Right cardiac atrium (tissue), 5 donors: ENCODE measurements at regions of chr1 and their contacts with region 1.

Region 1: GRCh38 chr1:26145041-26145959 is 13.6 kb upstream of the FAM110D start:
- DNase-seq: peak; percentile 78 to 86 (median 82)
- ATAC-seq: peak; percentile 88 to 92
- H3K4me3 ChIP-seq: no peak overlapping the region
- H3K27ac ChIP-seq: no peak overlapping the region
- H3K4me1 ChIP-seq: no peaks in the 10 kb centered on the region
- H3K27me3 ChIP-seq: no peaks in the 10 kb centered on the region

Region 2: DNA sequence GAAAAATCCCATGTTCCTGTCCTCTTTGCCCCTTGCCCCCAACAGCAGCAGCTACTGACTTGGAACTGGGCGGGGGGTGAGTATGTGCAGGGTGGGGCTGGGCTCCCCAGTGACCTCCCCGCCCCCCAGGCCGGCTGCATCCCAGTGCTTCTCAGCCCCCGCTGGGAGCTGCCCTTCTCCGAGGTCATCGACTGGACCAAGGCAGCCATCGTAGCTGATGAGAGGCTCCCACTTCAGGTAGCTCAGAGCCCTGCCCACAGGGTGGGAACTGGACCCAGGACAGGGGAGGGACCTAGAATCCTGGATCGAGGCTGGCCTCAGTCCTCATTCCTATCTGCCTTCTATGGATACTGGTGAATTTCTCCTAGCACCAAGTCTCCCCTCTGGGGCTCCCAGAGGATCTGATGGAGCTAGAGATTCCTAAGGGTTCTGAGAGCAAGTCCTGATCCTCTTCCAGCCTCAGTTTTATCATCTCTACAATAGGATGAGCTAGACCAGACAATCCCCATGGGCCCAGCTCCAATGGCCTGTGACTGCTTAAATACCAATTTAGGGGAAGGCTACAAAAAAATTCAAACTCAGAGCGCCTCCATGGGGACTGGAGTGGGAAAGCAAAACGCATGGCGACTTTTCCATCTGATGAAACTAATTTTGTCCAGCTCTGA is 115.7 kb before region 1 on chr1:
- intact Hi-C with region 1: loop called in 2 of 4 experiments (anchors 5 to 10 kb)
- DNase-seq: no peak
- ATAC-seq: no peak
- H3K4me3 ChIP-seq: no peak overlapping the region
- H3K27ac ChIP-seq: no peak overlapping the region
- H3K4me1 ChIP-seq: no peaks in the 10 kb centered on the region
- H3K27me3 ChIP-seq: no peaks in the 10 kb centered on the region

Region 3: DNA sequence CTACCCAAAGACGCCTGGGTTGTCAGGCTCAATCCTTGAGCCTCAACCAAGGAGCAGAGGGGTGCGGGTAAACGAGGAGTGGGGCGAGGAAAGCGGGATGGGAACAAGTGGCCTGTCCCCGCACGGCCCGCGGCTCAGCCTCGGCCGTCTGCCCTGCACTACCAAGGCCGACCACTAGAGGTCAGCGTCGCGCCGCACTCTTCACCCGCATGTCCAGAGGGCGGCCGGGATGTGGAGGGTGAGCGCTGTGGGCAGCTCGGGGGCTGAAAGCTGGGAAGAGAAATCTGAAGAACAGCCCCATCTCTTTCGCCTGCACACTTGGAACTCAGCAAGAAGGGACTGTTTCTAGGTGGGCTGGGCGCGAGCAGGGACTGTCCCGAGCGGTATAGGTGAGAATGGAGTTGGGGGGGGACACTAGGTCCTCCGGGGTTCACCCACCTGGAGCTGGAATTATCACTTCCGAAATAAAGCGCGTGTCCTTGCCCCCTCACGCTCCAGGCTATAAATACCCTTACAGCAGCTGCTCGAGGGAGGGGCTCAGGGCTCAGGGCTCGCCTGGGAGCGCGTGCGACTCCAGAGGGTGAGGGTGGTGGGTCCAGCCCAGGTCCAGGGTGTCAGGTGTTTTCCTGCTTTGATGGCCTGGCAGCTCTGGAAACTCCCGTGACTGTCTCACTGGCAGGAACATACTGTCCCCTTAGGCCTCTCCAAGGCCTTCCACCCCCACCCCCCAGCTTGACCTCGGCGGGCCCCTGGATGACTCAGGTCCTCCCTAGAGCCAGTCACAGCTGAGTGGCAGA is 109.1 kb before region 1 on chr1:
- intact Hi-C with region 1: loop called in 3 of 4 experiments (anchors 5 to 10 kb)
- DNase-seq: peak; percentile 83 to 92 (median 91)
- ATAC-seq: peak; percentile 91
- H3K4me3 ChIP-seq: peak overlapping the region; percentile 61
- H3K27ac ChIP-seq: peak overlapping the region; percentile 81
- H3K4me1 ChIP-seq: no peaks in the 10 kb centered on the region
- H3K27me3 ChIP-seq: no peaks in the 10 kb centered on the region

Region 4: DNA sequence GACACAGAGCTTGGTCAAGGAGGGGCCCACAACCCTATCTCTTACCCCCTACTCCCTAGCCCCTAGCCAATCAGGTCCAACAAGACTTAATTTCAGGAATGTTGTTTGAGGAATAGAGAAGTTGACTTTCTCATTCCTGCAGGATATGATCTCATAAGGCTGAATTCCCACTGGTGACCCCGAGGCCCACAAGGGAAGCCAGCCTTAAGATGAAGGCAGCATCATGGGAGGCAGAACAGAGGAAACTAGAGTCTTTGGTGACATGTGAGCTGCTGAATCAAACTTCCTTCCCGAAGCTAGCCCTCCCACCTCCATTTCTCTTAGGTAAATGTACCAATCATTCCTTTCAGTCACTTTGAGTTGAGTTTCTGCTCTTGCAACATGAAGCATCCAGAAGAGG is 42.8 kb before region 1 on chr1:
- intact Hi-C with region 1: loop called in 3 of 4 experiments (anchors 2 to 5 kb)
- DNase-seq: no peak
- ATAC-seq: no peak
- H3K4me3 ChIP-seq: no peak overlapping the region
- H3K27ac ChIP-seq: no peak overlapping the region
- H3K4me1 ChIP-seq: no peaks in the 10 kb centered on the region
- H3K27me3 ChIP-seq: no peaks in the 10 kb centered on the region

Region 5: DNA sequence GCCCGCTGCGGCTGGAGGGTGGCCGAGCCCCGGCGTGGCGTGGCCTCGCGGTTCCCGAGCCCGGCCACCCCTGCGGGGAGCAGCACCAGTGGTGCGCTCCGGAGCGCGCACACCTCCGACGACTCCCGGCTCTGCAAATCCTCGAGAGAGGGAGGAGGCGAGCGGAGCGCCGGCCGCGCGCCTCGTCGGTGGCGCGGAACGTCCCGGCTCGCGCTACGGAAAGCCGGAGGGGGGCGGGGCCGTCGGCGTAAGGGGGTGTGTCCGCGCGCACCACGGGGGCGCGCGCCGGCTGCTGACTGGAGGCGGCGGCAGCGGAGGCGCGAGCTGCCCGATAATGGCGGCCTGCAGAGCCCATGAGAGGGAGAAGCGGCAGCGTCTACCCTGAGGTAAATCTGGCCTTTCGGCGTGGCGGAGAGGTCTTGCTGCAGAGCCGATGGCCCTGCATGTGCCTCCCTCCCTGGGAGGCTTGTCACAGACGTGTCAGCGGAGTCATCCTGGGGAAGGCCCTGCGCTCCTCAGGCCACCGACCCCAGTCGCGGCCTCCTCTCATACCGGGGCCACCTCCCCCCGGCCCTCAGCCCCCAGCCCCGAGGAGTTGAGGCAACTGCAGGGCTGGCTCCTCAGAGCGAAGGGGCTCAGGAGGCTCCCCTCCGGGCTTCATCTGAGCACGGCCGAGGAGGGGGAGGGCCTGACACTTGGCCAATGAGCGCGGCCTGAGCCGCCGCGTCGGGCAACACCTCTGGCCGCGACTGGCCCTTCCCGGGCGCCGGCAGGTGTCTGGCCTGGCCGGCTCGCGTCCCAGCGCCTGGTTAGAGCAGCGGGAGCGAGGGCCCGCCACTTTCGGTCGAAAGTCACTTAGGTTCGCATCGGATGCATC is 33.5 kb before region 1 on chr1 and contains the start of gene PDIK1L:
- intact Hi-C with region 1: loop called in 1 of 4 experiments (anchors 5 kb)
- DNase-seq: peak; percentile 94 to 98 (median 97)
- ATAC-seq: peak; percentile 95 to 96
- H3K4me3 ChIP-seq: peak within 1 kb of the TSS; percentile 84
- H3K27ac ChIP-seq: peak within 1 kb of the TSS; percentile 89
- H3K4me1 ChIP-seq: no peaks in the 10 kb centered on the region
- H3K27me3 ChIP-seq: no peaks in the 10 kb centered on the region
- total RNA-seq, gene PDIK1L: 3.7 to 5.2 (median 4.5) TPM

Region 6: GRCh38 chr1:27257155-27257554 is 1111.9 kb after region 1 on chr1:
- intact Hi-C with region 1: no loop called
- DNase-seq: no peak
- ATAC-seq: no peak
- H3K4me3 ChIP-seq: no peak overlapping the region
- H3K27ac ChIP-seq: no peak overlapping the region
- H3K4me1 ChIP-seq: no peaks in the 10 kb centered on the region
- H3K27me3 ChIP-seq: no peaks in the 10 kb centered on the region